CD8-positive, alpha-beta memory T cell (primary cell): ENCODE measurements at regions of chr20 and their contacts with region 1.

Region 1: GRCh38 chr20:35490736-35491181 is 35.4 kb downstream of the CEP250 start:
- DNase-seq: peak; percentile 42 to 81 (median 68)
- H3K4me3 ChIP-seq: peak overlapping the region; percentile 99
- H3K4me3 Mint-ChIP-seq: peak overlapping the region; percentile 96 to 99 (median 99)
- H3K27ac ChIP-seq: peak overlapping the region; percentile 96
- H3K27ac Mint-ChIP-seq: peak overlapping the region; percentile 95 to 99 (median 99)
- H3K4me1 ChIP-seq: peaks cover 49% of the 10 kb centered on the region
- H3K4me1 Mint-ChIP-seq: peaks cover 59 to 80% (median 68%) of the 10 kb centered on the region in 3 donors
- H3K27me3 ChIP-seq: no peaks in the 10 kb centered on the region
- H3K27me3 Mint-ChIP-seq: no peaks in the 10 kb centered on the region

Region 2: GRCh38 chr20:35454881-35455609 is 35.7 kb before region 1 on chr20 and contains the start of gene CEP250:
- CTCF ChIA-PET with region 1: no interaction called
- POLR2A ChIA-PET with region 1: interaction called, 12 read pairs
- DNase-seq: peak; percentile 91 to 96 (median 95)
- H3K4me3 ChIP-seq: peak within 1 kb of the TSS; percentile 93
- H3K4me3 Mint-ChIP-seq: peak within 1 kb of the TSS; percentile 94 to 97 (median 96)
- H3K27ac ChIP-seq: peak within 1 kb of the TSS; percentile 90
- H3K27ac Mint-ChIP-seq: peak within 1 kb of the TSS; percentile 91 to 99 (median 97)
- H3K4me1 ChIP-seq: peaks cover 16% of the 10 kb centered on the region
- H3K4me1 Mint-ChIP-seq: peaks cover 13 to 38% (median 16%) of the 10 kb centered on the region in 3 donors
- H3K27me3 ChIP-seq: no peaks in the 10 kb centered on the region
- H3K27me3 Mint-ChIP-seq: no peaks in the 10 kb centered on the region
- total RNA-seq, gene CEP250: 34.8 to 42.2 TPM